Activated CD8-positive, alpha-beta T cell treated with anti-CD3 and anti-CD28 coated beads for 36 hours (primary cell): ENCODE measurements at regions of chr11 and their contacts with region 1.

Region 1: GRCh38 chr11:62081378-62082291 is 42.2 kb upstream of the INCENP start:
- DNase-seq: peak; percentile 85
- ATAC-seq: peak; percentile 95
- H3K4me3 Mint-ChIP-seq: peak overlapping the region; percentile 32
- H3K27ac Mint-ChIP-seq: no peak overlapping the region
- H3K4me1 Mint-ChIP-seq: peaks cover 5% of the 10 kb centered on the region
- H3K27me3 Mint-ChIP-seq: no peaks in the 10 kb centered on the region
- CTCF ChIP-seq: peak; percentile 96

Region 2: GRCh38 chr11:61792310-61793085 is 289.1 kb before region 1 on chr11 and contains the starts of genes FEN1 and TMEM258:
- CTCF ChIA-PET with region 1: interaction called, 28 read pairs
- POLR2A ChIA-PET with region 1: no interaction called
- intact Hi-C with region 1: no loop called
- DNase-seq: peak; percentile 94
- ATAC-seq: peak; percentile 87
- H3K4me3 Mint-ChIP-seq: peak within 1 kb of the TSS; percentile 89
- H3K27ac Mint-ChIP-seq: peak within 1 kb of the TSS; percentile 100
- H3K4me1 Mint-ChIP-seq: peaks cover 57% of the 10 kb centered on the region
- H3K27me3 Mint-ChIP-seq: no peaks in the 10 kb centered on the region
- CTCF ChIP-seq: no peak
- total RNA-seq, gene FEN1: 109 to 114 TPM
- total RNA-seq, gene TMEM258: 162 to 170 TPM

Region 3: DNA sequence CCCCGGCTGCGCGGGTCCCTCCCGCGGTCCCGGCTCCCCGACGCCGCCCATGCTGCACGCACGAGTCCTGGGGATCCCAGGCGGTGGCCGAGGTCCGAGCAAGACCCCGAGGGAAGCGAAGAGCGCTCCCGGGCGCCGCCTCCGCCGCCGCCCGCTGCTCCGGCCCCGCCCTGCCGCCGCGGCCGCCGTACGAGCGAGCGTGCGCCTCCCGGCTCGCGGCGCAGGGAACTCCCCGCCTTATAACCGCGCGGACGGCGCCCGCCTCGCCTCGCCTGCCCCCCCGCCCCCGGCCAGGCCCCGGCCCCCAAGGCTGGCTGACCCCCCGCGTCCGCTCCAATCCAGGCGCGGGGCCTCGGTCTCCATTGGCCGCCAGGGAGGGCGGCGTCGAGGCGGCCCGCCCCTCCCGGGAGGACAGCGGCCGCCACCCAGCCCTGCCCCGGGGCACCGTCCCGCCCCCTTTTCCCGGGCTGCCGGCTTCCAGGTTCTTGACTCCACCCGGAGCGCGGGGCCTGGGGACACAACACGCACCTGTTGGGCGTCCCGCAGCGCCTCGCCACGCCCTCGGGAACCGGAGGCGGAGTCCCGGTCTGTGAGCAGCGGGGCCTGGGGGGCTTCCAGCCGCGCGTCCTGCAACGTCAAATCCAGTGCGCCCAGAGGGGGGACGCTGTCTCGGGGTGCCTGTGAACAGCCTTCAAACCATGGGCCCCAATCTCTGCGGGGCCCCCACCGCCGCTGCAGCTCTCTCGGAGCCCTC is 190.1 kb before region 1 on chr11 and contains the start of gene FADS3:
- CTCF ChIA-PET with region 1: interaction called, 352 read pairs
- POLR2A ChIA-PET with region 1: no interaction called
- intact Hi-C with region 1: no loop called
- DNase-seq: peak; percentile 68
- ATAC-seq: peak; percentile 65
- H3K4me3 Mint-ChIP-seq: peak within 1 kb of the TSS; percentile 77
- H3K27ac Mint-ChIP-seq: no peak within 1 kb of the TSS
- H3K4me1 Mint-ChIP-seq: peaks cover 2% of the 10 kb centered on the region
- H3K27me3 Mint-ChIP-seq: no peaks in the 10 kb centered on the region
- CTCF ChIP-seq: no peak
- total RNA-seq, gene FADS3: 10.3 to 13.9 TPM

Region 4: GRCh38 chr11:61961570-61962212 is 119.9 kb before region 1 on chr11:
- CTCF ChIA-PET with region 1: interaction called, 36 read pairs
- POLR2A ChIA-PET with region 1: interaction called, 3 read pairs
- intact Hi-C with region 1: loop called (anchors 10 kb)
- DNase-seq: no peak
- ATAC-seq: no peak
- H3K4me3 Mint-ChIP-seq: no peak overlapping the region
- H3K27ac Mint-ChIP-seq: no peak overlapping the region
- H3K4me1 Mint-ChIP-seq: peaks cover 26% of the 10 kb centered on the region
- H3K27me3 Mint-ChIP-seq: peaks cover under 1% of the 10 kb centered on the region
- CTCF ChIP-seq: no peak

Region 5: DNA sequence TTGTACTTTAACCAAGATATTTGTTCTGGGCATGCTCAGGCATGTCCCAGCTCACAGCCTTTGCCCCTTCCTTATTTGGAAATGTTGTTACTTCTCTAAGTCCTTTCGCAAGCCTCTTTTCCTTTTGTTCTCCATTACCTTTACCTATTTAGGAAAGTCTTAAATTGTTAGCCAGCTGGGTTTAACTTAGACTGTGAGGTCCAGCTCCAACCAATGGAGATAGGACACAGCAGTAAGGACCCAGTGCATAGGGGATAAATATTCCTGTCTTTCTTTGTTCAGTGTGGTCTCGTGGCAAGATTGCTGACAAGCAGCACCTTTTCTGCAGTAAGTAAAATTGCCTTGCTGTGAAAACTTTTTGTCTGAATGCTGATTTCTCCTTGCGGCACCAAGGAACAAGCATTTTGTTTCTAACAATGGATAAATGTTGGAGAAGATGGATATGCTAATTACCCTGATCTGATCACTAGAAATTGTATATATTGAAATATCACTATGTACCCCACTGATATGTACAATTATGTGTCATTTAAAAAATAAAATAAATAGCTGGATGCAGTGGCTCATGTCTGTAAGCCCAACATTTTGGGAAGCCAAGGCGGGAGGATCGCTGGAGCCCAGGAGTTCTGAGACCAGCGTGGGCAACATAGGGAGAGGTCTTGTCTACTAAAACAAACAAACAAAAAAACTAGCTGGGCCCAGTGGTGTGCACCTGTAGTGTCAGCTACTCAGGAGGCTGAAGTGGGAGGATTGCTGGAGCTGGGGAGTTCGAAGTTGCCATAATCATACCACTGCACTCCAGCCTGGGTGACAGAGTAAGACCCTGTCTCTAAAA is 82.3 kb before region 1 on chr11:
- CTCF ChIA-PET with region 1: interaction called, 21 read pairs
- POLR2A ChIA-PET with region 1: no interaction called
- intact Hi-C with region 1: no loop called
- DNase-seq: no peak
- ATAC-seq: no peak
- H3K4me3 Mint-ChIP-seq: no peak overlapping the region
- H3K27ac Mint-ChIP-seq: peak overlapping the region; percentile 61
- H3K4me1 Mint-ChIP-seq: no peaks in the 10 kb centered on the region
- H3K27me3 Mint-ChIP-seq: no peaks in the 10 kb centered on the region
- CTCF ChIP-seq: no peak

Region 6: GRCh38 chr11:62061351-62062222 is 20.0 kb before region 1 on chr11:
- CTCF ChIA-PET with region 1: interaction called, 52 read pairs
- POLR2A ChIA-PET with region 1: no interaction called
- intact Hi-C with region 1: no loop called
- DNase-seq: no peak
- ATAC-seq: no peak
- H3K4me3 Mint-ChIP-seq: no peak overlapping the region
- H3K27ac Mint-ChIP-seq: no peak overlapping the region
- H3K4me1 Mint-ChIP-seq: no peaks in the 10 kb centered on the region
- H3K27me3 Mint-ChIP-seq: no peaks in the 10 kb centered on the region
- CTCF ChIP-seq: no peak

Region 7: GRCh38 chr11:62166371-62166770 is 84.7 kb after region 1 on chr11:
- CTCF ChIA-PET with region 1: no interaction called
- POLR2A ChIA-PET with region 1: no interaction called
- intact Hi-C with region 1: no loop called
- DNase-seq: no peak
- ATAC-seq: no peak
- H3K4me3 Mint-ChIP-seq: no peak overlapping the region
- H3K27ac Mint-ChIP-seq: no peak overlapping the region
- H3K4me1 Mint-ChIP-seq: peaks cover 1% of the 10 kb centered on the region
- H3K27me3 Mint-ChIP-seq: peaks cover 20% of the 10 kb centered on the region
- CTCF ChIP-seq: no peak